Activated CD4-positive, alpha-beta T cell treated with anti-CD3 and anti-CD28 coated beads for 36 hours (primary cell): ENCODE measurements at regions of chr1 and their contacts with region 1.

Region 1: GRCh38 chr1:11681071-11681771 is at the start of gene MAD2L2:
- DNase-seq: peak; percentile 96
- ATAC-seq: peak; percentile 85
- H3K4me3 Mint-ChIP-seq: peak within 1 kb of the TSS; percentile 83
- H3K27ac Mint-ChIP-seq: peak within 1 kb of the TSS; percentile 88
- H3K4me1 Mint-ChIP-seq: peaks cover 9% of the 10 kb centered on the region
- H3K27me3 Mint-ChIP-seq: no peaks in the 10 kb centered on the region
- total RNA-seq, gene MAD2L2: 70.4 to 71.5 TPM

Region 2: DNA sequence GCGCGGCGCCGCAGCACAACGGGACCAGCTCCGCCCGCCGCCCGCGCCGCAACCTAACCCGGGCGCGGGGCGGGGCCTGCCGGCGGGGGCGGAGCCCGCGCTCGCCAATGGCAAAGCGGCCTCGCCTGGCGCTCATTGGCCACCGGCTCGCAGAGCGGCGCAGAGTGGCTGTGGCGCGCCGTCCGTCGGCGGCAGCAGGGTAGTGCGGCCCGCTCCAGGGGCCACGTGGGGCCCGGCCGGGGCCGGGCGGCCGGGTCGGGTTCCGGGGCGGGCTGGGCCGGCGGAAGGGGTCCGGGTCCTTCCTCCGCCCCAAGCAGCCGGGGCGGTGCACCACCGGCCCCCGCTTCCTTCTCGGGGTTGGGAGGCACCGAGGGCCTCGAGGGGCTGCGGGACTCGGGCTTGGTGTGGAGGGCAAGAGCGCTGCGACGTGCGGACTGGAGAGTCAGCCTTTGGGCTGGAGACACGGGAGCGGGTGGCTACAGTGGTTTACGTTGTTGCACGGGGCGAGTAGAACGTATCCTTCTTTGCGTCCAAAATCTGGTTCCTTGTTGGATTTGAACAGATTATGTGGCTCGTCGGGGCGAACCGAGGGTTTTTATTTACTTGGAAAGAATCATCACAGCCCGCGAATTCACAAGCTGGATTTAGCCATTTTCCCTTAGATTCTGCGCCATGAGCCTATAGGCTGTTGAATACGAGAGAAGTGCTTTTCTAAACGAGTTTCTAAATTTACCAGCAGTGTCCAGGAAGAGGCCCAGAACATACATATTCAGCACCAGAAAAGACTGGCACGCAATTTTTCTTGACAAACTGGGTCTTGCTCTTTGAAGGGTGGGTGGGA is 621.0 kb before region 1 on chr1 and contains the start of gene SRM:
- CTCF ChIA-PET with region 1: no interaction called
- POLR2A ChIA-PET with region 1: no interaction called
- intact Hi-C with region 1: loop called in 1 of 2 experiments (anchors 1 kb)
- DNase-seq: peak; percentile 95
- ATAC-seq: peak; percentile 98
- H3K4me3 Mint-ChIP-seq: peak within 1 kb of the TSS; percentile 93
- H3K27ac Mint-ChIP-seq: peak within 1 kb of the TSS; percentile 94
- H3K4me1 Mint-ChIP-seq: peaks cover 41% of the 10 kb centered on the region
- H3K27me3 Mint-ChIP-seq: no peaks in the 10 kb centered on the region
- total RNA-seq, gene SRM: 180 to 242 TPM

Region 3: DNA sequence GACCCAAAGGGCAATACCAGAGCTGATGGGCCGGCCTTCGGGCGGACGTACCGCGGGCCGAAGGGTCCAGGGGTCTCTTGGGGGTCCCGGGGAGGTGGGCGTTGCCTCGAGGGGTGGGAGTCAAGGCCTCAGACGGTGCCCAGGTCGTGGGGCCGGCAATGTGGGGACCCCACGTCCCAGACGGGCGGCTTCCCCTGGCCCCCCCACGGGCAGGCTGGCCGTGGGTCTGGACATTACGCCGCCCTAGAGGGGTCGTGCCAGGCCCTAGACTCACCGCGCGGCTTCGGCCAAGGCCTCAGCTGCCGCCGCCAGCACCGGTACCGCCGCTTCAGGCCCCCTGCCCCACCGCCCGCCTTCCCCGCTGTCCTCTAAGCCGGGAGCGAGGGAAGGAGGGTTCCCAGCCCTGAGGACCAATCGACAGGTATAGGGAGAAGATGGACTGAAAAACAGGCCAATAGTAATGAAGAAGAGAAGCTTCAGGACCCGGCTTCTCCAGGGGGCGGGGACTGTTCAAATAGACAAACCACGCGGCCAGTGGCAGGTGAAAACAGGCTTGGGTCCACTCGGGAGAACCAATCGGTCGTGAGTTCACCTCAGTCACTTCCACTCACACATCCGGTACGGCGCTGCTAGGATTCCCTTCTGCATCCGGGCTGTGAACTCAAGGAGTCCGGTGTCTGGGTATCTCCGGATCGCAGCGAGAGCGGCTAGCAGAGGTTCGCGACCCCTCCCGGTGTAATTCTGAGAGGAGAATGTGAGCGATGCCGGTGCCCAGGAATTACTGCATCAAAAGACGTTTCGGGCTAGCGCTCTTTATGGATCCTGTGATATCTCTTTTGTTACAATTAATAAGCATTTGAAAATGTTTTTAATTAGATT is 418.8 kb before region 1 on chr1 and contains the start of gene MTOR:
- CTCF ChIA-PET with region 1: no interaction called
- POLR2A ChIA-PET with region 1: no interaction called
- intact Hi-C with region 1: loop called in 1 of 2 experiments (anchors 1 kb)
- DNase-seq: peak; percentile 98
- ATAC-seq: peak; percentile 98
- H3K4me3 Mint-ChIP-seq: peak within 1 kb of the TSS; percentile 90
- H3K27ac Mint-ChIP-seq: peak within 1 kb of the TSS; percentile 87
- H3K4me1 Mint-ChIP-seq: peaks cover 15% of the 10 kb centered on the region
- H3K27me3 Mint-ChIP-seq: no peaks in the 10 kb centered on the region
- total RNA-seq, gene MTOR: 32.3 to 36.3 TPM

Region 4: GRCh38 chr1:11645670-11646265 is 35.5 kb before region 1 on chr1:
- CTCF ChIA-PET with region 1: interaction called, 10 read pairs
- POLR2A ChIA-PET with region 1: no interaction called
- intact Hi-C with region 1: no loop called
- DNase-seq: peak; percentile 93
- ATAC-seq: peak; percentile 57
- H3K4me3 Mint-ChIP-seq: no peak overlapping the region
- H3K27ac Mint-ChIP-seq: no peak overlapping the region
- H3K4me1 Mint-ChIP-seq: peaks cover 10% of the 10 kb centered on the region
- H3K27me3 Mint-ChIP-seq: no peaks in the 10 kb centered on the region

Region 5: DNA sequence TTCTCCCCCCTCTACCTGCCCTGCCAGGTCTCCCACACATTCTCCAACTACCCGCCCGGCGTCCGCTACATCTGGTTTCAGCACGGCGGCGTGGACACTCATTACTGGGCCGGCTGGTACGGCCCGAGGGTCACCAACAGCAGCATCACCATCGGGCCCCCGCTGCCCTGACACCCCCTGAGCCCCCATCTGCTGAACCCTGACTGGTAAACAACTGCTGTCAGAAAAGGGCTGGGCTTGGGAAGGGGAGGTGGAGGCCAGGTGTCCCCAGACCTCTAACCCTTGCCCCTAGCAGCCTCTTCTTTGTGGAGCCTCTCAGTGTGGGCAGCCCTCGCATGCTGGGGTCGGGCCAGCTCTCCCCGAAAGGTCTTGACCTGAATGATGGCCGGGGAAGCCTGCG is 20.1 kb before region 1 on chr1:
- CTCF ChIA-PET with region 1: interaction called, 8 read pairs
- POLR2A ChIA-PET with region 1: interaction called, 5 read pairs
- intact Hi-C with region 1: loop called (anchors 1 kb)
- DNase-seq: no peak
- ATAC-seq: no peak
- H3K4me3 Mint-ChIP-seq: no peak overlapping the region
- H3K27ac Mint-ChIP-seq: no peak overlapping the region
- H3K4me1 Mint-ChIP-seq: no peaks in the 10 kb centered on the region
- H3K27me3 Mint-ChIP-seq: no peaks in the 10 kb centered on the region

Region 6: DNA sequence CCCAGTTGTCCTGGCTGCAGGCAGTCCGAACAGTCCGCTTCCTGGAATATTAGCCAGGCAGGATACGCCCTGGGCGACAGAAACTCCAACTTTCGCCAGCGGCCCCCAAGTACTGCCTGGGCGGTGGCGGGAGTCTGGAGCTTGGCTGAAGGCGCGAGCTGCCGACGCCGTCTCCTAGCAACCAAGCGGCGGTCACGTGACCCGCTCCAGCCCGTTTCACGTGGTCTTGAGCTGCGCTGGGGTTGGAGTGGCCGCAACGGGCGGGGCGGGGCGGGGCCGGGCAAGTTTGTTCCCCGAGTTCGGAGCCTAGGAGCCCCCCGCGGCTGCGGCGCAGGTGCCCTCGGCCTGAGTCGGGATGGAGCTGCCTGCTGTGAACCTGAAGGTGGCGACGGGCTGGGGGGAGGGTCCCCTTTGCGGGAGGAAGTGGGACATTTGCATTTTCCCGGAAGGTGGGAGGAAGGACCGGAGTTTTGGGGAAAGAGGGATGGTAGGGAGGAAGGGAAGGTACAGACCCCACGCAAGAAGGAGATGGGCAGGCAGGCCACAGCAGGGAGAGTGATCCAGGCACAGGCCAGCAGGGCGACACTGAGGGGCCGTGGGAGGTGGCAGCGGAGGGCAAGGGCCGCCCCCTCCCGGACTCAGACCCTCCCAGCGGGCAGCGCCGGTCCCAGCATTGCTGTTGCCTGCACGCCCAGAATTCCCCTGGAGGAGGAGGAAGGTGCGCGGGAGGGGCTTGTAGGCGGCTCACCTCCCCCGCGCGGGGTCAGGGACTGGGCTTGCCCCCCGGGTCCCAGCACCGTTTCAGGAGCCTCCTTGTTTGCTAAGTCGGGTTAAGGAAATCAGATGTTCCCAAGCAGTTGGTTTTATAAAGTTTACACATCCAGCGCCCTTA is 54.9 kb after region 1 on chr1 and contains the start of gene AGTRAP:
- CTCF ChIA-PET with region 1: no interaction called
- POLR2A ChIA-PET with region 1: interaction called, 3 read pairs
- intact Hi-C with region 1: loop called (anchors 1 to 5 kb)
- DNase-seq: peak; percentile 95
- ATAC-seq: peak; percentile 81
- H3K4me3 Mint-ChIP-seq: peak within 1 kb of the TSS; percentile 87
- H3K27ac Mint-ChIP-seq: peak within 1 kb of the TSS; percentile 82
- H3K4me1 Mint-ChIP-seq: peaks cover 56% of the 10 kb centered on the region
- H3K27me3 Mint-ChIP-seq: no peaks in the 10 kb centered on the region
- total RNA-seq, gene AGTRAP: 13.2 to 13.3 TPM

Region 7: GRCh38 chr1:11768821-11769220 is 87.6 kb after region 1 on chr1:
- CTCF ChIA-PET with region 1: no interaction called
- POLR2A ChIA-PET with region 1: no interaction called
- intact Hi-C with region 1: no loop called
- DNase-seq: no peak
- ATAC-seq: no peak
- H3K4me3 Mint-ChIP-seq: no peak overlapping the region
- H3K27ac Mint-ChIP-seq: no peak overlapping the region
- H3K4me1 Mint-ChIP-seq: no peaks in the 10 kb centered on the region
- H3K27me3 Mint-ChIP-seq: peaks cover under 1% of the 10 kb centered on the region

Region 8: DNA sequence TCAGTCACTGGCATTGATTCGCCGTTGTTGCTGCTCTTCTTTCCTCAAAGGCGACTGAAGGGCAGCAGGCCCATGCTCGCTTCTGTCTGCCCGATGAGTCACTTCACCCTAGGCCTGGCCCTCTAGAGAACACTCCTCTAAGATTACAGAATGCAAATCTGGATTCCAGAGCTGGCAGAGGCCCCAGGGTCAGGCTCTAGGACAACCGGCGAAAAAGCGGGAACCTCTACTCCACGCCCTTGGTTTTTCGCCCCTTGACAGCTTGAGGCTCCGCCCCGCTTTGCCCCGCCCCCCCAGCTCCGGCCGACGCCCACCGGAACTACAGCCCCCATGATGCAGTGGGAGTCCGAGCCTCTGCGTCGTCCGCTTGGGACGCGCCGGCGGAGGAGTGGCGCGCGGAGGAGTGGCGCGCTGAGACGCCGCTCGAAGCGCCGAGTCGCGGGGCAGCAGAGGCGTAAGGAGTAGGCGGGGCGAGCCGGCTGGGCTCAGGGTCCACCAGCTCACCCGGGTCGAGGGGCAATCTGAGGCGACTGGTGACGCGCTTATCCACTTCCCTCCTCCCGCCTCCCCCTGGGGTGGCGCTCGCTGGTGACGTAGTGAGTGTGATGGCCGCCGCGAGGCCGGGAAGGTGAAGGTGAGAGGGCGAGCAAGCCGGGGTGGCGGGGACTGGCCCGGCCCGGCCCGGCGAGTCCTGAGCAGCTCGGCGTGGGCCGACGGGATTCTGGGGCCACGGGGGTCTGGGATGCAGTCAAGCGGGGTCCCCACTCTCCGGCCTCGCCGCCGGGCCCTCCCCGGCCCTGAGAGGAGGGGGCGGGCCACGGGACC is 298.8 kb after region 1 on chr1 and contains the start of gene MFN2:
- CTCF ChIA-PET with region 1: no interaction called
- POLR2A ChIA-PET with region 1: no interaction called
- intact Hi-C with region 1: loop called in 1 of 2 experiments (anchors 1 kb)
- DNase-seq: peak; percentile 96
- ATAC-seq: peak; percentile 93
- H3K4me3 Mint-ChIP-seq: peak within 1 kb of the TSS; percentile 97
- H3K27ac Mint-ChIP-seq: peak within 1 kb of the TSS; percentile 94
- H3K4me1 Mint-ChIP-seq: peaks cover 36% of the 10 kb centered on the region
- H3K27me3 Mint-ChIP-seq: no peaks in the 10 kb centered on the region
- total RNA-seq, gene MFN2: 52.5 to 71.6 TPM